Ascending aorta (tissue), 2 donors: ENCODE measurements at regions of chr20 and their contacts with region 1.

Region 1: GRCh38 chr20:4585104-4585753 is 136.5 kb upstream of the PRND start:
- DNase-seq: no peak
- H3K4me3 ChIP-seq: no peak overlapping the region
- H3K27ac ChIP-seq: no peak overlapping the region
- H3K4me1 ChIP-seq: no peaks in the 10 kb centered on the region
- H3K27me3 ChIP-seq: no peaks in the 10 kb centered on the region
- CTCF ChIP-seq: no peak

Region 2: GRCh38 chr20:4470375-4470774 is 114.9 kb before region 1 on chr20:
- intact Hi-C with region 1: loop called (anchors 10 kb)
- DNase-seq: no peak
- H3K4me3 ChIP-seq: no peak overlapping the region
- H3K27ac ChIP-seq: no peak overlapping the region
- H3K4me1 ChIP-seq: peaks cover 0 to 21% of the 10 kb centered on the region in 2 donors
- H3K27me3 ChIP-seq: no peaks in the 10 kb centered on the region
- CTCF ChIP-seq: no peak